Right cardiac atrium (tissue), 5 donors: ENCODE measurements at regions of chr3 and their contacts with region 1.

Region 1: GRCh38 chr3:111717601-111718000 is 122.5 kb upstream of the ZBED2 start:
- DNase-seq: peak; percentile 65 to 83 (median 65)
- ATAC-seq: peak; percentile 88 to 95
- H3K4me3 ChIP-seq: no peak overlapping the region
- H3K27ac ChIP-seq: no peak overlapping the region
- H3K4me1 ChIP-seq: peaks cover 4% of the 10 kb centered on the region
- H3K27me3 ChIP-seq: no peaks in the 10 kb centered on the region

Region 2: DNA sequence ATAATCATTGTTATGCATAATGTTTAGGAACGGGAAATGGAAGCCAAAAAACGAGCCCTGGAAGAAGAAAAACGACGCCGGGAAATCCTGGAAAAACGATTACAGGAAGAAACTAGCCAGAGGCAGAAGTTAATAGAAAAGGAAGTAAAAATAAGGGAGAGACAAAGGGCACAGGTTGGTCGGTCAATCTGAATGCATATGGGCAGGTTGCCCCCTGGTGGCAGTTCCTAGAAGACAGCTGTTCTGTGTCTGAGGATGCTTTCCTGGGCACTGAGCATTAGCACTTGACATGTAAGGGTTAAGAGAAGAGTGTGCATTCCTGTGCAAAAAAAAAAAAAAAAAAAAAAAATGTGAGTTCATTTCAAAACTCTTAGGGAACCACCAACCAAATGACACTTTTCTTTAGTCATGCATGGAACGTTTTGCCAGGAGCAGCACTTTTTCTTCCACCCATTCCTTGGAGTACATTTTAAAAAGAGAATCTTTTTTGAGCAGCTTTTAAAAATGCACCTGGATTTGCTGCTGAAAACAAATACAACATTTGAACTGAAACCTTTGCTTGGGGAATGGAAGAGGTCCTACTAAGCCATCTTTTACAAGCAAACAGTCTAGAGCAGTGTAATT is 250.2 kb after region 1 on chr3:
- intact Hi-C with region 1: loop called (anchors 2 to 5 kb)
- DNase-seq: peak; percentile 79 to 91 (median 83)
- ATAC-seq: peak; percentile 90 to 92
- H3K4me3 ChIP-seq: no peak overlapping the region
- H3K27ac ChIP-seq: no peak overlapping the region
- H3K4me1 ChIP-seq: peaks cover 2% of the 10 kb centered on the region
- H3K27me3 ChIP-seq: no peaks in the 10 kb centered on the region